CD4-positive, alpha-beta memory T cell (primary cell): ENCODE measurements at regions of chr11 and their contacts with region 1.

Region 1: GRCh38 chr11:128157423-128158298 is 429.7 kb downstream of the ETS1 start:
- DNase-seq: peak; percentile 60 to 80 (median 76)
- H3K4me3 ChIP-seq: peak overlapping the region; percentile 13 to 27
- H3K4me3 Mint-ChIP-seq: peak overlapping the region; percentile 77 to 91 (median 85)
- H3K27ac ChIP-seq: no peak overlapping the region
- H3K27ac Mint-ChIP-seq: peak overlapping the region in 5 of 7 donors; percentile 54 to 73 (median 61)
- H3K4me1 ChIP-seq: no peaks in the 10 kb centered on the region
- H3K4me1 Mint-ChIP-seq: peaks cover 0 to 8% (median 5%) of the 10 kb centered on the region in 4 donors
- H3K27me3 ChIP-seq: no peaks in the 10 kb centered on the region
- H3K27me3 Mint-ChIP-seq: no peaks in the 10 kb centered on the region

Region 2: DNA sequence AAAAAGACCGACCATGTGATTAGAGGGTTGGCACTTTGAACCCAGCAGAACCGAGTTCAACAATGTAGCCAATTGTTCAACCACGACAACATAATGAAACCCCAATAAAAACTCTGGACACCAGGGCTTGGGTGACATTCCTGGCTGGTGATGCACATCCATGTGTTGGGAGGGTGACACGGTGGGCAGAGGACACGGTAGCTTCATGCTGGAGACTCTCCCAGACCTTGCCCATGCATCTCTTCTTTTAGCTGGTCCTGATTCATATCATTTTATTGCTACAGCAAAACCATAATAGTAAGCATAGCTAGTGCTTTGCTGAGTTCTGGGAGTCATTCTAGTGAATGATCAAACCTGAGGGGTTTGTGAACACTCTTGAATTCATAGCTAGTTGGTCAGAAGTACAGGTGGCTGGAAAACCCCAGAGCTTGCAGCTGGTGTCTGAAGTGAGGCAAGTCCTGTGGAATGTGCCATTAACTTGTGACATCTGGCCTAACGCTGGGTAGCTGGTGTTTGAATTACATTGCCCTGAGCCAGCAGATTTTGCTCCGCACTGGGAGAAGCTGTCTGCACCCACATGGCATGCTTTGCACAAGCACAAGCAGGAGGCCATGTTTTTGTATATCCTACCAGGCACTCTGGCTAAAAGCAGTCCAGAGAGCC is 1960.3 kb before region 1 on chr11:
- CTCF ChIA-PET with region 1: no interaction called
- POLR2A ChIA-PET with region 1: no interaction called
- intact Hi-C with region 1: no loop called
- DNase-seq: no peak
- H3K4me3 ChIP-seq: no peak overlapping the region
- H3K4me3 Mint-ChIP-seq: no peak overlapping the region
- H3K27ac ChIP-seq: no peak overlapping the region
- H3K27ac Mint-ChIP-seq: no peak overlapping the region
- H3K4me1 ChIP-seq: no peaks in the 10 kb centered on the region
- H3K4me1 Mint-ChIP-seq: peaks cover 0 to 3% (median 0%) of the 10 kb centered on the region in 4 donors
- H3K27me3 ChIP-seq: no peaks in the 10 kb centered on the region
- H3K27me3 Mint-ChIP-seq: no peaks in the 10 kb centered on the region

Region 3: GRCh38 chr11:127875131-127875530 is 282.5 kb before region 1 on chr11:
- CTCF ChIA-PET with region 1: no interaction called
- POLR2A ChIA-PET with region 1: no interaction called
- intact Hi-C with region 1: no loop called
- DNase-seq: no peak
- H3K4me3 ChIP-seq: no peak overlapping the region
- H3K4me3 Mint-ChIP-seq: no peak overlapping the region
- H3K27ac ChIP-seq: no peak overlapping the region
- H3K27ac Mint-ChIP-seq: no peak overlapping the region
- H3K4me1 ChIP-seq: no peaks in the 10 kb centered on the region
- H3K4me1 Mint-ChIP-seq: no peaks in the 10 kb centered on the region
- H3K27me3 ChIP-seq: peaks cover 3% of the 10 kb centered on the region
- H3K27me3 Mint-ChIP-seq: peaks cover 15 to 16% of the 10 kb centered on the region in 2 donors

Region 4: DNA sequence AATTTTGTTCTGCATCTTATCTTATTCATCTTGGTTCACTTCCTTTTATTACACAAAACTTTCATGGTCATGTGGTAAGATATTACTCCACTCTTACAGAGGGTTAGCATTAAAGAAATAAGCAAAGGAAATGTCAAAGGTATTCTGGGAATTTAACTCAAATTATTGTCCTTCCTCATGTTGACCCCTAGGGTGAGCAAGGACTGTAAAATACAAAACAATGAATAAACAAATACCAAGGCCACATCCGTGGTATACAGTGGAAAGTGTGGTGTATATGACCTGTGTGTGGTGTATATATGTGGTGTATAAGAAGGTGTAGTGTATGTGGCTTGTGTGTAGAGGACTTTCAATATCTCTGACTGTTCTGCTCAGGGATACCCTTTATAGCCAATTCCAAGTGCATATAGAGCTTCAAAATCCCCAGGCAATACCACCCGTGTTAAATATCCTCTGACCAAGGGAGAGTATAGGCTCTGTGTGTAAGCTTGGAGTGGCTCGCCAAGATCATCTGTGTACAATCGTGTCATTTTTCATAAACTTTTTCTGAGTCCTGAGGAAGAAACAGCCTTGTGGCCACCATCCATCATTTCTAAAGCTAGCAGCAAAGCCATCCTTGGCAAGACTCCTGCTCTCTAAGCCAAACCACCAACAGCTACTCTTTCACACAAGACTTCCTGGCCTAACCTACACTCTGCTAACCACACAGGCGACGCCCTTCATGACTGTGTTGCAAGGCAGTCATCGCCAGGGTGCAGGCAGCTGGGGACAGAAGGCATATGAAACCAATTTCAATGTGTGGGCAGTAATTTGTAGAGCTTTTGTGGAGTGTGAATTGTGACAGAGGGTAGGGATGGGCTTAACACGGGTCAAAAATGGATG is 118.3 kb before region 1 on chr11:
- CTCF ChIA-PET with region 1: interaction called, 127 read pairs
- POLR2A ChIA-PET with region 1: interaction called, 25 read pairs
- intact Hi-C with region 1: loop called (anchors 2 kb)
- DNase-seq: peak; percentile 79 to 90 (median 83)
- H3K4me3 ChIP-seq: peak overlapping the region; percentile 18 to 43
- H3K4me3 Mint-ChIP-seq: peak overlapping the region in 2 of 8 donors; percentile 81 to 86
- H3K27ac ChIP-seq: peak overlapping the region; percentile 45
- H3K27ac Mint-ChIP-seq: peak overlapping the region in 5 of 7 donors; percentile 90 to 96 (median 93)
- H3K4me1 ChIP-seq: peaks cover 90% of the 10 kb centered on the region
- H3K4me1 Mint-ChIP-seq: peaks cover 32 to 47% (median 41%) of the 10 kb centered on the region in 4 donors
- H3K27me3 ChIP-seq: no peaks in the 10 kb centered on the region
- H3K27me3 Mint-ChIP-seq: no peaks in the 10 kb centered on the region

Region 5: DNA sequence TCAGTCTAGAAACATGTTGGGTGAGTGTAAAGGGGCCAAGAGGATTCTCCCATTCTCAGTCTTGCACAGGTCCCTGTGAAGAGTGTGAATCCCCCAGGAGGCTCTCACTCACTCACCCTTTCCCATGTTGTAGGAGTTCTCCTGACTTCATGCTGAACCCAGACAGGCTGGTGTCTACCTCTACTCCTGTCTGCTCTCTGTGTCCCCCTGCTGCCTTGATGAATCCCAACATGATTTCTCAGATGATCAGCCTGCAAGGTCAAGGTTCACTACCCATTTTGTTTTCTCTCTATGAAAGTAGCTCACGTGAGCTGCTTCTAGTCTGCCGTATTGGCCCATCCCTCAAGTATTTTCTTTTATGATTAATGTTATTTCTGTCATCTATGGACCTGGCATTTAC is 70.9 kb before region 1 on chr11:
- CTCF ChIA-PET with region 1: interaction called, 11 read pairs
- POLR2A ChIA-PET with region 1: no interaction called
- intact Hi-C with region 1: no loop called
- DNase-seq: peak in 1 of 5 donors; percentile 10
- H3K4me3 ChIP-seq: no peak overlapping the region
- H3K4me3 Mint-ChIP-seq: peak overlapping the region in 3 of 8 donors; percentile 31 to 53 (median 44)
- H3K27ac ChIP-seq: no peak overlapping the region
- H3K27ac Mint-ChIP-seq: peak overlapping the region in 6 of 7 donors; percentile 8 to 68 (median 25)
- H3K4me1 ChIP-seq: peaks cover 20% of the 10 kb centered on the region
- H3K4me1 Mint-ChIP-seq: peaks cover 30 to 52% (median 41%) of the 10 kb centered on the region in 4 donors
- H3K27me3 ChIP-seq: no peaks in the 10 kb centered on the region
- H3K27me3 Mint-ChIP-seq: no peaks in the 10 kb centered on the region

Region 6: DNA sequence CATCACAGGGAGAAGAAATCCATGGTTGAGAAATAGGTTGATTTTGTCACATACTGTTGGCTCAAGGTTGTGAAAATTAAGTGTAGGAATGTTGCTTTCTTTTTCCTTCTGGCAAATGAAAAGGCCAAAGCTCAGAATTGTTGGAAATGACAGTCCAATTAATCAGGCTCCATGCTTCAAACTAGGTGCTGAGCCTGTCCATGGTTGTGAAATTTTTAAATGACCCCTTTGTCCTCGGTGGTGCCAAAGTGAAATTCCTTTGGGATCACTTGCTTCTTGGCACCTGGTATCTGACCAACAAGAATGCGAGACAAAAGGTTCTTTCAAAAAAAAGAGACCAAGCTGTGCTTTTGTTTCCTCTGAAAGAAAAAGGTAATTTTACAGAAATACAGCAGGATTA is 22.2 kb before region 1 on chr11:
- CTCF ChIA-PET with region 1: interaction called, 39 read pairs
- POLR2A ChIA-PET with region 1: no interaction called
- intact Hi-C with region 1: no loop called
- DNase-seq: no peak
- H3K4me3 ChIP-seq: no peak overlapping the region
- H3K4me3 Mint-ChIP-seq: no peak overlapping the region
- H3K27ac ChIP-seq: no peak overlapping the region
- H3K27ac Mint-ChIP-seq: no peak overlapping the region
- H3K4me1 ChIP-seq: peaks cover 6% of the 10 kb centered on the region
- H3K4me1 Mint-ChIP-seq: peaks cover 10 to 29% (median 15%) of the 10 kb centered on the region in 4 donors
- H3K27me3 ChIP-seq: no peaks in the 10 kb centered on the region
- H3K27me3 Mint-ChIP-seq: no peaks in the 10 kb centered on the region

Region 7: DNA sequence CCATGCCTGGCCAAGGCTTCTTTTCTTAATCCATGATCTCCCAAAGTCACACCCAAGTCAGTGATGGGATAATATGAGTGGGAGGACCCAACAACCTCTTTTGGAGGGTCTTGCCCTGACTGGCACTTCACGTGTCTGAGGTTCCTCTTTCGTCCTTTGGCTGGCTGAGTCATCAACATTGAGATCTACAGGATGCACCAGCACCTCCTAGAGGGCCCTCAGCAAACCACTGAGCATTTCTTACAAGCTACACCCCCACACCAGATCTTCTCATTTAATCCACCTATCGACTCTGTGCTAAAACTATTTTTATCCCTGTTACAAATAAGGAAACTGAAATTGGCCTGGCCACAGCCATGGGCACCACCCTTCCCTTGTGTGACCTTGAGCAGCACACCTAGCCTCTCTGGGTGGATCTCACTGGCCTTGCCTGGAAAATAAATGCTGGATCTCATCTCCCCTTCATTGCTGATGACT is 599.6 kb after region 1 on chr11:
- CTCF ChIA-PET with region 1: interaction called, 13 read pairs
- POLR2A ChIA-PET with region 1: no interaction called
- intact Hi-C with region 1: no loop called
- DNase-seq: peak; percentile 64 to 85 (median 72)
- H3K4me3 ChIP-seq: no peak overlapping the region
- H3K4me3 Mint-ChIP-seq: peak overlapping the region in 6 of 8 donors; percentile 8 to 82 (median 54)
- H3K27ac ChIP-seq: peak overlapping the region; percentile 34
- H3K27ac Mint-ChIP-seq: peak overlapping the region; percentile 77 to 96 (median 94)
- H3K4me1 ChIP-seq: peaks cover 70% of the 10 kb centered on the region
- H3K4me1 Mint-ChIP-seq: peaks cover 59 to 87% (median 76%) of the 10 kb centered on the region in 4 donors
- H3K27me3 ChIP-seq: no peaks in the 10 kb centered on the region
- H3K27me3 Mint-ChIP-seq: no peaks in the 10 kb centered on the region

Region 8: GRCh38 chr11:128848815-128849455 is 691.3 kb after region 1 on chr11:
- CTCF ChIA-PET with region 1: interaction called, 16 read pairs
- POLR2A ChIA-PET with region 1: no interaction called
- intact Hi-C with region 1: loop called (anchors 5 kb)
- DNase-seq: peak in 4 of 5 donors; percentile 46 to 62 (median 56)
- H3K4me3 ChIP-seq: no peak overlapping the region
- H3K4me3 Mint-ChIP-seq: peak overlapping the region in 1 of 8 donors; percentile 27
- H3K27ac ChIP-seq: no peak overlapping the region
- H3K27ac Mint-ChIP-seq: peak overlapping the region in 5 of 7 donors; percentile 3 to 78 (median 46)
- H3K4me1 ChIP-seq: peaks cover 35% of the 10 kb centered on the region
- H3K4me1 Mint-ChIP-seq: peaks cover 23 to 42% (median 37%) of the 10 kb centered on the region in 4 donors
- H3K27me3 ChIP-seq: no peaks in the 10 kb centered on the region
- H3K27me3 Mint-ChIP-seq: no peaks in the 10 kb centered on the region